Activated B cell treated with CpG ODN at 0.5 μM for 24 hours (primary cell): ENCODE measurements at regions of chr6 and their contacts with region 1.

Region 1: GRCh38 chr6:49409951-49410542 is 53.0 kb downstream of the MMUT start:
- DNase-seq: peak; percentile 19
- ATAC-seq: peak; percentile 54
- H3K4me3 Mint-ChIP-seq: no peak overlapping the region
- H3K27ac Mint-ChIP-seq: no peak overlapping the region
- H3K4me1 Mint-ChIP-seq: no peaks in the 10 kb centered on the region
- H3K27me3 Mint-ChIP-seq: peaks cover 6% of the 10 kb centered on the region
- CTCF ChIP-seq: peak; percentile 72

Region 2: DNA sequence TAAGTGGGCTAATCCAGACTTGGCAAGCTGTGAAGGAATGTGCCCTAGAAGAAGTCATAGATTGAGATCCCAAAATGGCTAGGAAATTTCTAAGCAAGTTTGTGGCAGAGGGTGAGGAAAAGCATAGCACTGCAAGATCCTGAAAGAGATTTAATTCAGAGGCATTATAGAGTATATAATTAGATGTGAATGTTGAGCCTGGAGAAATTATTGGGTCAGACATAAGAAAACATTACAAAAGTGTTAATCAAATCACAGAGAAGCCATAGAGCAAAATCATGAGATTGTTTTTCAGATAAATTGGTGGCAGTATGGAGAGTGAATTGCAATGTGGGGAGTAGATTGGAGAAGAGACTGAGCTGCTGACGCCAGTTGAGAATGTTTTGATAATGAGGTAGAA is 1842.5 kb before region 1 on chr6:
- CTCF ChIA-PET with region 1: no interaction called
- POLR2A ChIA-PET with region 1: no interaction called
- intact Hi-C with region 1: no loop called
- DNase-seq: no peak
- ATAC-seq: no peak
- H3K4me3 Mint-ChIP-seq: no peak overlapping the region
- H3K27ac Mint-ChIP-seq: no peak overlapping the region
- H3K4me1 Mint-ChIP-seq: no peaks in the 10 kb centered on the region
- H3K27me3 Mint-ChIP-seq: no peaks in the 10 kb centered on the region
- CTCF ChIP-seq: no peak

Region 3: DNA sequence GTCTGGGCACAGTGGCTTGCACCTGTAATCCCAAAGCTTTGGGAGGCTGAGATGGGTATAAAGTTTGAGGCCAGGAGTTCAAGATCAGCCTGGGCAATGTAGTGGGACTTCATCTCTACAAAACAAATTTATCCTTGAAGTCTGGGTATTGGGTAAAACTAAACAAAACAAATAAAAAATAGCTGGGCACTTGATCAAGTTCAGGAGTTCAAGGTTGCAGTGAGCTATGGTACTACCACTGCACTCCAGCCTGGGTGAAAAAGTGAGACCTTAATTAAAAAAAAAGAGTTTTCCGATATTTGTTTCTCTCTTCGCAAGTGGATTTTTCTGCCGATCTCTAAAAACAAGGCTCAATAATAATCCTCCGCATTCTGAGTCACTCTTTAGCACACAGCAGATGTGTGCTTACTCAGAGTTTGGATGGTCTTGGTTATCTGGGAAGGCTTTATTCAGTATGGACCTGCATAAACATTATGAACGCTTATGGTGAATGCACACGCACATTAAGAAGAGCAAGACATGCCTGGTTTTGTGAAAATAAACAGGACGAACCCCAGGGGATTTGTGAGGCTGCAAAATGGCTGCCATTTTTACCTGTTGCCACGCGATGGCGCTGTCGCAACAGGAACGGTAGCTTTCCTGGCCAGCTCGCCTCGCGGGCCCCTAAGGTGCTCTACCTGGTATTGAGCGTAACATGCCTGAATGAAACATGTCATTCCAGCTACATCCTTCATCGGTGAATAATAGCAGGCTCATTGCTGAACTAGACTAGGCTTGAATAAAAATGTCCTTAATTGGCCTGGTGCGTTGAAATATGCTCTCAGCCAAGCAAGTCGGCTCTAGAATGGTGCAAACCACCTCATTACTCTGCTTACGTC is 1622.2 kb before region 1 on chr6:
- CTCF ChIA-PET with region 1: interaction called, 6 read pairs
- POLR2A ChIA-PET with region 1: no interaction called
- intact Hi-C with region 1: loop called (anchors 1 kb)
- DNase-seq: peak; percentile 22
- ATAC-seq: peak; percentile 34
- H3K4me3 Mint-ChIP-seq: no peak overlapping the region
- H3K27ac Mint-ChIP-seq: no peak overlapping the region
- H3K4me1 Mint-ChIP-seq: no peaks in the 10 kb centered on the region
- H3K27me3 Mint-ChIP-seq: peaks cover 24% of the 10 kb centered on the region
- CTCF ChIP-seq: no peak

Region 4: DNA sequence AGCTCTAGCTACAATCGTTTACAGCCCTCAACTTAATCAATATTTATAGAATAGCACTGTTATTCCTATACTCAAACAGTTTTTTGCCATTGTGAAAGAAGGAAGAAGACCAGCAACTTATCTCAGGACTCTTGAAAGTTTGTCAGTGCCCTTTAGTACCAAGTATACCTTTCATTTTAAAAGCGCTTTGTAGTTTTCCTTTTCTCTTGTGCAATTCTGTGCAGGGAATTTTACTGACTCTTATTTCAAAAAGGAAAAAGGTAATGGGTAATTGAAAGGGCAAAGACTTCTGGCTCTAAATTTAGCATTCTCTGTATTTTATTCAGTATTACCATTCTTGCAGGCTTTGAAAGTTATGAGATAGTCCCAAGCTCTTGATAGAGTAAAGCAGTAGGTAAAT is 243.4 kb after region 1 on chr6:
- CTCF ChIA-PET with region 1: no interaction called
- POLR2A ChIA-PET with region 1: no interaction called
- intact Hi-C with region 1: no loop called
- DNase-seq: no peak
- ATAC-seq: no peak
- H3K4me3 Mint-ChIP-seq: no peak overlapping the region
- H3K27ac Mint-ChIP-seq: no peak overlapping the region
- H3K4me1 Mint-ChIP-seq: no peaks in the 10 kb centered on the region
- H3K27me3 Mint-ChIP-seq: no peaks in the 10 kb centered on the region
- CTCF ChIP-seq: no peak